ENCODE measurements at regions of chr16 and their contacts with region 1.

Region 1: GRCh38 chr16:30557957-30558788 is at the start of gene ZNF764:
- DNase-seq: peak; percentile 98
- H3K4me3 Mint-ChIP-seq: peak within 1 kb of the TSS; percentile 90
- H3K27ac Mint-ChIP-seq: peak within 1 kb of the TSS; percentile 79
- H3K4me1 Mint-ChIP-seq: peaks cover 20% of the 10 kb centered on the region
- H3K27me3 Mint-ChIP-seq: no peaks in the 10 kb centered on the region
- CTCF ChIP-seq: no peak
- total RNA-seq, gene ZNF764: 16.5 and 16.7 TPM in 2 replicates

Region 2: DNA sequence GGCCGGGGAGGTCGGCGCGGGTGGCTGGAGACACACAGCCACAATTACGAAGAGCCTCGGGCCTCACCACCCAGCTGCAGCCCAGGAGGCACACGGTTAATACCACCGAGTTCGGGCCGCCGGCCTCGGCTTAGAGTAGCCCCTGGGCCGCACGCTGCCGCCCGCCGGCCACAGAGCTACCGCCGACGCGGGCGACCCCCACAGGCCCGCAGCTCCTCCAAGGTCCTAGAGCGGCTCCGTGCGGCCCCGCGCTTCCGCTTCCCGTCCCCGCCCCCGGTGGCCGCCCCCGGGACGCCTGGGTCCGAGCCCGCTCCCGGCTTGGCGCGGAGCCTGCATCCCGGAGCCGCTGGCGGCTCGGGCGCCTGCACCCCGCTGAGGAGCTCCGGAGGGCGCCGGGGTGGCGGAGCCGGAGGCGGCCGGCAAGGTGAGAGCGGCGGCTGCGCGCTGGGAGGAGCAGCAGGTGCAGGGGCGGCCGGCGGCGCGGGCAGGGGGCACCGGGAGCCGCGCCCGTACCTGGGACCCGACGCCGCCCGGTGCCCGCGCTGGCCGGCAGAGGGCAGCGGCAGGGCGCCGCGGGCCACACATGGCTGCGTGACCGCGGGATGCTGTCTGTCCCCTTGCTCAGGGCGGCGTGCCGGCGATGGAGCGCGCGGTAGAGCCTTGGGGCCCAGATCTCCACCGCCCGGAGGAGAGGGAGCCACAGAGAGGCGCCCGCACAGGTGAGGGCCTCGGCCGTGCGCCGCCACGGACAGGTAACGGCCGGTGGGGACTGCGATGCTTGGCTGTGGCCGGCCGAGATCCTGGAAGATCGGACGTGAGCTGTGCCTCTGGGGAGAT is 162.8 kb before region 1 on chr16 and contains the start of gene ZNF48:
- CTCF ChIA-PET with region 1: interaction called, 14 read pairs
- intact Hi-C with region 1: no loop called
- DNase-seq: peak; percentile 93
- H3K4me3 Mint-ChIP-seq: peak within 1 kb of the TSS; percentile 79
- H3K27ac Mint-ChIP-seq: peak within 1 kb of the TSS; percentile 78
- H3K4me1 Mint-ChIP-seq: peaks cover 31% of the 10 kb centered on the region
- H3K27me3 Mint-ChIP-seq: no peaks in the 10 kb centered on the region
- CTCF ChIP-seq: peak; percentile 70
- total RNA-seq, gene ZNF48: 21.2 and 24.8 TPM in 2 replicates